GM12878 (cell line): ENCODE measurements at regions of chr11 and their contacts with region 1.

Region 1: DNA sequence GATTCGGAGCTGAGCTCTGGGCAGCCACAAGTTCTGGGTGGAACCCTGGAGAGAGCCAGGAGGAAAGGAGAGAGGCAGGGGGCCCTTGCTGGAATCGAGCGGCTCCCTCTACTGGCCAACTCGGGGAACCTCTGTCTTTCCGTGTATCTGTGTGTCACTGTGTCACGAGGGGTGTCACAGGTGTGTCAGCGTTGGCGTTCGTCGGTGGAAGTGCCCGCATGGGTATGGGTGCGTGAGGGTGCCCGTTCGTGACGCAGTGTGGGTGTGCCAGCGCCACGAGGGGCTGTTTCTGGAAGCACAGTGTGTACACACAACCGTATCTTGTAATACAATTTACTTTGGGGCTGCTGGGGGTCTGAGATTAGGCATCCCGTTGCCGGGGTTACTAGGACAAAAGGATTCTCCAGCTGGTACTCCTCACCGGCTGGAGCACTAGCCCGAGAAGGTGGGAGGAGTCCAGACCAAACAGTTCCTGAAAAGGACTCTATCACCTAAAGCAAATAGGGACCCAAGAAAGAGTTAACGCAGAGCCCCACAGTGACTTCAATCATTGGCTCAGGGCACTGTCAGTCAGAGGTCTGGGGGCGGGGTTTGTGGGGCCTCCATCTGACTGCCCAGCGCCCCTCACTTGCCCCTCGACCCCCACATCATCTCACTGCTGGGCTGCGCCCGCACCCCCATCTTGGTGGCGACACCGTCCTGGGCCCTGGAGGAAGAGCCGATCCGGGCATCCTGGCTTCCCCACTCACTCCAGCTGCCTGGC is 2.6 kb upstream of the BCL9L start:
- DNase-seq: peak; percentile 67
- ATAC-seq: peak; percentile 67
- H3K4me3 ChIP-seq: peak overlapping the region; percentile 97
- H3K27ac ChIP-seq: peak overlapping the region; percentile 67
- H3K4me1 ChIP-seq: peaks cover 35% of the 10 kb centered on the region
- H3K27me3 ChIP-seq: no peaks in the 10 kb centered on the region
- CTCF ChIP-seq: peak; percentile 93 to 97 (median 96)
- EP300 ChIP-seq: peak; percentile 15 to 60; a peak in 1 of 4 replicates
- POLR2A ChIP-seq: 0 out of 2 replicates have a peak, but pooled peaks have one; percentile 49
- RAD21 ChIP-seq: peak; percentile 63

Region 2: DNA sequence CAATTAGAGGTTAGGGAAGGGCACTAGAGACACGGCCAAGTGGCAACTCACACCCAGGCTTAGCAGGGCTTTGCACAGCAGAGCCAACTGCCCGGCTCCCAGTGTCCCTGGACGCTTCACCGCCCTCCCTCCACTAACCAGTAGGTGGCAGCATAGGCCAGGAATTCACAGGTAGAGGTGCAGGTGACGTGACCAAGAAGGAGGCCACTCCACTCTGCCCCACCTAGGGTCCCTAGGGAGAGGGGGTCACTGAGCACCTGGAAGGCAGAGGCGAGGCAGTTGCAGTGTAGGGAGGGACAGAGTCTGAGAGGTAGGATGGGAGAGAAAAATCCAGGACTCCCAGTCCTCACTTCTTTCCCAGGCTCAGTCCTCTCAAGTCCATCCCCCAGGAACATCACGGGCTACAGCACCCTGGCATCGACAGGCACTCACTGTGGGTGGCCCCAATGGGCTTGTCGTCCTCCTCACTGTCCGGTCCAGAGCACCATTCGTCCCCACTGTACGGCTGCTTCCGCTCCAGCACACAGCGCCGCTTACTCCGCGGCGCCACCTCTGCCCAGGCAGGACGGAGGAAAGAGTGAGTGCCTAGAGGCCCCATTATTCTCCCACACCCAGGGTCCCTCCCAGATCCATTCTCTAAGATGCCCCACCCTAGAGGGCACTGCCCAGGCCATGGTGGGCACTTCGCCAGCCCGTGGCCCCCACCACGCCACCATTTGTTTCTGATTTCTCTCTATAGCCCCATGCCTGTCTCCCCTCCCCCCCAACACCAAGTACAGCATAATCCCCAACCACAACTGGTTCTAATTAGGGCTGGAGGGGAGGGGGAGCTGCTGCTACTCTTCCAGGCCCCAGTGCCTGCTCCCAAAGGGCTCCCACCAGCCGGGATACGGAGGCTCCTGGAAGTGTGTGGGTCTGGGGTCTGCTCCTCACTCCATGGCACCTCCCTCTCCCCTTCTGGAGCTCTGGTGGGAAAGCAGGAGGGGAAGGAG is 20.9 kb before region 1 on chr11:
- CTCF ChIA-PET with region 1: interaction called, 330 read pairs
- POLR2A ChIA-PET with region 1: interaction called, 105 read pairs
- RAD21 ChIA-PET with region 1: interaction called, 169 read pairs
- SMC1A ChIA-PET with region 1: interaction called, 185 read pairs
- in situ Hi-C with region 1: no loop called
- intact Hi-C with region 1: loop called (anchors 1 kb)
- DNase-seq: peak; percentile 61
- ATAC-seq: peak; percentile 98
- H3K4me3 ChIP-seq: no peak overlapping the region
- H3K27ac ChIP-seq: no peak overlapping the region
- H3K4me1 ChIP-seq: peaks cover 10% of the 10 kb centered on the region
- H3K27me3 ChIP-seq: no peaks in the 10 kb centered on the region
- CTCF ChIP-seq: peak; percentile 89 to 99 (median 93); a peak in 5 of 6 replicates
- EP300 ChIP-seq: no peak
- POLR2A ChIP-seq: 0 out of 2 replicates have a peak, but pooled peaks have one; percentile 13
- RAD21 ChIP-seq: peak; percentile 98

Region 3: GRCh38 chr11:118939953-118940598 is 11.8 kb after region 1 on chr11:
- CTCF ChIA-PET with region 1: interaction called, 18 read pairs
- POLR2A ChIA-PET with region 1: interaction called, 8 read pairs
- RAD21 ChIA-PET with region 1: interaction called, 3 read pairs
- SMC1A ChIA-PET with region 1: interaction called, 4 read pairs
- in situ Hi-C with region 1: no loop called
- intact Hi-C with region 1: no loop called
- DNase-seq: no peak
- ATAC-seq: peak; percentile 88
- H3K4me3 ChIP-seq: no peak overlapping the region
- H3K27ac ChIP-seq: no peak overlapping the region
- H3K4me1 ChIP-seq: peaks cover 14% of the 10 kb centered on the region
- H3K27me3 ChIP-seq: no peaks in the 10 kb centered on the region
- CTCF ChIP-seq: no peak
- EP300 ChIP-seq: no peak
- POLR2A ChIP-seq: 0 out of 2 replicates have a peak, but pooled peaks have one; percentile 22
- RAD21 ChIP-seq: no peak

Region 4: GRCh38 chr11:118956094-118956846 is 28.0 kb after region 1 on chr11 and contains the start of gene UPK2:
- CTCF ChIA-PET with region 1: interaction called, 14 read pairs
- POLR2A ChIA-PET with region 1: no interaction called
- RAD21 ChIA-PET with region 1: interaction called, 7 read pairs
- SMC1A ChIA-PET with region 1: interaction called, 8 read pairs
- in situ Hi-C with region 1: no loop called
- intact Hi-C with region 1: loop called (anchors 2 kb)
- DNase-seq: peak; percentile 19
- ATAC-seq: peak; percentile 100
- H3K4me3 ChIP-seq: no peak within 1 kb of the TSS
- H3K27ac ChIP-seq: no peak within 1 kb of the TSS
- H3K4me1 ChIP-seq: no peaks in the 10 kb centered on the region
- H3K27me3 ChIP-seq: peaks cover 0 to 9% of the 10 kb centered on the region in 2 experiments; a peak in 2 of 4 replicates
- CTCF ChIP-seq: peak; percentile 91 to 98 (median 97)
- EP300 ChIP-seq: no peak
- POLR2A ChIP-seq: no peak
- RAD21 ChIP-seq: peak; percentile 94
- polyA plus RNA-seq, gene UPK2: not detected